Activated CD4-positive, alpha-beta T cell treated with anti-CD3 and anti-CD28 coated beads, Interleukin-2, amount 10 ng/mL, durations not matched to agents 24 days and 14 days (primary cell): ENCODE measurements at regions of chr2 and their contacts with region 1.

Region 1: GRCh38 chr2:134918526-134919340 is at the start of gene CCNT2:
- DNase-seq: peak; percentile 100
- H3K4me3 Mint-ChIP-seq: peak within 1 kb of the TSS; percentile 96
- H3K27ac Mint-ChIP-seq: peak within 1 kb of the TSS; percentile 97
- H3K4me1 Mint-ChIP-seq: peaks cover 23% of the 10 kb centered on the region
- H3K27me3 Mint-ChIP-seq: peaks cover 6% of the 10 kb centered on the region
- total RNA-seq, gene CCNT2: 46.0 and 48.5 TPM in 2 replicates

Region 2: GRCh38 chr2:134668821-134669220 is 249.9 kb before region 1 on chr2:
- intact Hi-C with region 1: loop called (anchors 5 kb)
- DNase-seq: peak; percentile 94
- H3K4me3 Mint-ChIP-seq: peak overlapping the region; percentile 61
- H3K27ac Mint-ChIP-seq: peak overlapping the region; percentile 46
- H3K4me1 Mint-ChIP-seq: peaks cover 62% of the 10 kb centered on the region
- H3K27me3 Mint-ChIP-seq: peaks cover 40% of the 10 kb centered on the region

Region 3: GRCh38 chr2:134718817-134719814 is 199.6 kb before region 1 on chr2 and contains the start of gene TMEM163:
- intact Hi-C with region 1: loop called (anchors 2 kb)
- DNase-seq: peak; percentile 76
- H3K4me3 Mint-ChIP-seq: peak within 1 kb of the TSS; percentile 71
- H3K27ac Mint-ChIP-seq: peak within 1 kb of the TSS; percentile 19
- H3K4me1 Mint-ChIP-seq: peaks cover 9% of the 10 kb centered on the region
- H3K27me3 Mint-ChIP-seq: peaks cover 75% of the 10 kb centered on the region
- total RNA-seq, gene TMEM163: 0.23 TPM in 1 of 2 replicates, not detected in the other

Region 4: GRCh38 chr2:135741395-135742324 is 822.9 kb after region 1 on chr2 and contains the start of gene UBXN4:
- intact Hi-C with region 1: loop called (anchors 1 kb)
- DNase-seq: peak; percentile 96
- H3K4me3 Mint-ChIP-seq: peak within 1 kb of the TSS; percentile 99
- H3K27ac Mint-ChIP-seq: peak within 1 kb of the TSS; percentile 100
- H3K4me1 Mint-ChIP-seq: peaks cover 36% of the 10 kb centered on the region
- H3K27me3 Mint-ChIP-seq: no peaks in the 10 kb centered on the region
- total RNA-seq, gene UBXN4: 116 and 127 TPM in 2 replicates

Region 5: DNA sequence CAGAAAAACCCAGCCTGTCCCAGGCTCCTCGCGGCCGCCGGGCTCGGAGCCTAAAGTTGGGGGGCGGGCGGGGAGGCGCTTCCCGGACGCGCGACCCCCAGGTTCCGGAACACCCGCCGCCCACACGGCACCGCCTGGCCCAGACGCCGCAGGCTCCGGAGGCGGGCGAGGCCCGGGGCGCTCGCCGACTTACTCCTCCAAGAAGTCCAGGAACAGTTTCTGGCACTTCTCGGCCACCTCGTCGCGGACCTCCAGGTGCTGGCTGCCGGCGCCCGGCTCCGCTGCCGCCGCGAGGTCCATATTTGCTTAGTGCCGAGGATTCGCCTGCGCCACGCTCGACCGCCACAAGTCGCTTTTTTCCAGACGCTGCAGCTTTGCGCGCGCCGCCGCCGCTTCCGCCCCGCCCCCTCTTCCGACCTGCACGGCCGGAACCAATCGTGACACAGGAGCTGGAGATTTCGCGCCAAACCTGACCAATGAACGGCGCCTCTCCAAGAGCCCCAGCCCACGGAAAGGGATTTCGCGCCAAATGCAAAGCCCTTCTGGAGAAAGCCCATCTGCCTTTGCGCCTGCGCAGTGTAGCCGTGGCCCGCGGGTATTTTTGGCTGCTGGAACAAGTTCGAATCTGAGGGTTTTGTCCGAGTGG is 957.5 kb after region 1 on chr2 and contains the start of gene MCM6:
- intact Hi-C with region 1: loop called (anchors 1 kb)
- DNase-seq: peak; percentile 100
- H3K4me3 Mint-ChIP-seq: peak within 1 kb of the TSS; percentile 83
- H3K27ac Mint-ChIP-seq: peak within 1 kb of the TSS; percentile 97
- H3K4me1 Mint-ChIP-seq: peaks cover 31% of the 10 kb centered on the region
- H3K27me3 Mint-ChIP-seq: peaks cover 2% of the 10 kb centered on the region
- total RNA-seq, gene MCM6: 196 and 197 TPM in 2 replicates